ENCODE measurements at regions of chr11 and their contacts with region 1.

Region 1: GRCh38 chr11:68121067-68121899 is at the start of gene CHKA:
- DNase-seq: peak; percentile 94
- ATAC-seq: peak; percentile 97
- H3K4me3 Mint-ChIP-seq: peak within 1 kb of the TSS; percentile 71
- H3K27ac Mint-ChIP-seq: peak within 1 kb of the TSS; percentile 68
- H3K4me1 Mint-ChIP-seq: peaks cover 7% of the 10 kb centered on the region
- H3K27me3 Mint-ChIP-seq: no peaks in the 10 kb centered on the region
- total RNA-seq, gene CHKA: 5.5 to 7.5 TPM

Region 2: DNA sequence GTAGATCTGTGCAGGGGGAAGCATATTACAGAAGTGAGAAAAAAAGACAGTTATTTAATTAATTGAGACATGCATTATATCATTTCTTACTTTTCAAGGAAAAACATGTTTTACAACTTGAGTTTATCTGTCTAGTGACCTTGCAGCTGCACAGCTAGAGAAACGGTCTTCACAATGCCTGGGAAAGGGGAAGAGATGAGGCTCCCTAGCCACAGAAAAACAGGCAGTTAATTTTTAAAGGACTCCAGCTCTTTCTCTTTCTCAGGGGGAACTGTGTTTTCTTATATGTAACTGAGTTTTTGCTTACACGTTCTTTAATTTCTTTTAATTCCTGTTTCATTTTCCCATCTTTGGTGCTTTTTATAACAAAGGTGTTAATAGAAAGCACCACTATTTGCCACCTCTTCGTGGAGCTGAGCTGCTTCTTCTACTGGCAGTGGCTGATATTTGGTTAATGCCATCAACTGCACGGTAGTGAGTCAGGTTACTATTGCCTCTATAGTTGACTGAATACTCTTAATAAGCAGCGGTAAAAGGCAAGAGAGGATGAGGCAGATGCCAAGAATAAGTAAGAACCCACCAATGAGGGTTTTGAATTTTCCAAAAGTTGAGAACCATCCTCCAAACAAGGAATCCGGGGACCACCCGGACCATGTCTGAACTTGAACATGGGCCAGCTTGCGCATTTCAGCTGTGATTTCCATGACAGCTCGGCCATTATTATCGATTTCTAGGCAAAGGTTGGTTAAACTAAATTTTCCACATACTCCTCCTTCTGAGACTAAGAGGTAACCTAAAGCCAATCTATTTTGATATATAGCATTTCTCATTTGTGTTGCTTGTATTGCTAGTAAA is 435.4 kb before region 1 on chr11:
- CTCF ChIA-PET with region 1: no interaction called
- POLR2A ChIA-PET with region 1: no interaction called
- intact Hi-C with region 1: no loop called
- DNase-seq: no peak
- ATAC-seq: no peak
- H3K4me3 Mint-ChIP-seq: no peak overlapping the region
- H3K27ac Mint-ChIP-seq: no peak overlapping the region
- H3K4me1 Mint-ChIP-seq: no peaks in the 10 kb centered on the region
- H3K27me3 Mint-ChIP-seq: peaks cover 7% of the 10 kb centered on the region

Region 3: GRCh38 chr11:68030318-68031138 is 90.8 kb before region 1 on chr11 and contains the start of gene NDUFS8:
- CTCF ChIA-PET with region 1: no interaction called
- POLR2A ChIA-PET with region 1: no interaction called
- intact Hi-C with region 1: loop called in 1 of 2 experiments (anchors 1 kb)
- DNase-seq: peak; percentile 97
- ATAC-seq: peak; percentile 99
- H3K4me3 Mint-ChIP-seq: peak within 1 kb of the TSS; percentile 96
- H3K27ac Mint-ChIP-seq: peak within 1 kb of the TSS; percentile 95
- H3K4me1 Mint-ChIP-seq: peaks cover 26% of the 10 kb centered on the region
- H3K27me3 Mint-ChIP-seq: no peaks in the 10 kb centered on the region
- total RNA-seq, gene NDUFS8: 108 to 113 TPM

Region 4: GRCh38 chr11:68038718-68039525 is 82.4 kb before region 1 on chr11 and contains the start of gene TCIRG1:
- CTCF ChIA-PET with region 1: no interaction called
- POLR2A ChIA-PET with region 1: interaction called, 3 read pairs
- intact Hi-C with region 1: loop called (anchors 1 to 2 kb)
- DNase-seq: peak; percentile 82
- ATAC-seq: peak; percentile 76
- H3K4me3 Mint-ChIP-seq: peak within 1 kb of the TSS; percentile 88
- H3K27ac Mint-ChIP-seq: peak within 1 kb of the TSS; percentile 90
- H3K4me1 Mint-ChIP-seq: peaks cover 18% of the 10 kb centered on the region
- H3K27me3 Mint-ChIP-seq: no peaks in the 10 kb centered on the region
- total RNA-seq, gene TCIRG1: 117 to 151 TPM

Region 5: DNA sequence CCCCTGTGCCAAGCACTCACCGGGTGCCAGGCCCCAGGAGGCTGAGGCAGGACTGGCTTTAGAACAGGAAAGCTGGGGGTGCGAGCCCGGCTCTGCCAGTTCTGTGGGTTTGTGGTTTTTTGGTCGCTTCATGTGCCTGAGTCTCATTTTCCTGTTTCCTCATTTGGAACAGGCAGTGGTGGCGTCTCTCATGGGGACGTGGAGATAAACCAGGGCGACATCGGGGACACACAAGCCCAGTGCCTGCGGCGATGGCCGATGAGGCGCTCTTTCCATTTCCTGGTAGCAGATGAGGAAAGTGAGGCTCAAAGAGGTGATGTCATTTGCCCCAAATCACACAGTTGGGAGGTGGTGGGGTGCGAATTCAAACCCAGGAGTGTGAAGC is 20.7 kb after region 1 on chr11:
- CTCF ChIA-PET with region 1: no interaction called
- POLR2A ChIA-PET with region 1: no interaction called
- intact Hi-C with region 1: loop called in 1 of 2 experiments (anchors 1 kb)
- DNase-seq: peak; percentile 83
- ATAC-seq: peak; percentile 94
- H3K4me3 Mint-ChIP-seq: no peak overlapping the region
- H3K27ac Mint-ChIP-seq: peak overlapping the region; percentile 85
- H3K4me1 Mint-ChIP-seq: peaks cover 12% of the 10 kb centered on the region
- H3K27me3 Mint-ChIP-seq: no peaks in the 10 kb centered on the region

Measured in activated CD4-positive, alpha-beta T cell treated with anti-CD3 and anti-CD28 coated beads for 36 hours (primary cell).